ENCODE measurements at regions of chr7 and their contacts with region 1.

Region 1: DNA sequence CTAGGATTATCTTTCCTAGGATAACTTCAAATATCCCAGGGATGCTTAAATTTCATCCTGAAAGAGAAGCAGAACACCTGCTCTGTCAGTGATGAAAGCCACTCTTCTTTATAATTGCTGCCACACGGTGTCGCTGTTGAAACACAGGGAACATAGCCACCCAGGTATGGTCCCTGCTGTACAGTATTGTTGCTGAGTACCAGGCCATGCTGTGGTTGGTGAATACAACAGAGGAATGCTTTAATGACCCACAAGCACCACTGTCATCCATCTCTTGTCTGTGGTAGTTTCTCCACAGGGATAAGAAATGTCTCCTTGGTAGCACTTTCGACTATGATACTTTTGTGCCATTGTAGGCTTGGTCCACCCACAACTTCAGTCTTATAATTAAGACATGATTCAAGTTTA is 70.6 kb upstream of the STARD3NL start:
- DNase-seq: peak; percentile 70
- H3K4me3 ChIP-seq: no peak overlapping the region
- H3K27ac ChIP-seq: no peak overlapping the region
- H3K4me1 ChIP-seq: peaks cover 0 to 12% (median 0%) of the 10 kb centered on the region in 6 donors
- H3K27me3 ChIP-seq: peaks cover 0 to 6% (median 0%) of the 10 kb centered on the region in 7 donors
- CTCF ChIP-seq: peak; percentile 35 to 78 (median 68)
- POLR2A ChIP-seq: no peak

Region 2: GRCh38 chr7:38169847-38170246 is 62.4 kb after region 1 on chr7:
- intact Hi-C with region 1: loop called (anchors 10 kb)
- DNase-seq: no peak
- H3K4me3 ChIP-seq: no peak overlapping the region
- H3K27ac ChIP-seq: peak overlapping the region in 2 of 8 donors; percentile 10 to 21
- H3K4me1 ChIP-seq: peaks cover 0 to 20% (median 3%) of the 10 kb centered on the region in 6 donors
- H3K27me3 ChIP-seq: no peaks in the 10 kb centered on the region
- CTCF ChIP-seq: no peak
- POLR2A ChIP-seq: no peak

Region 3: GRCh38 chr7:38222481-38223096 is 115.1 kb after region 1 on chr7:
- intact Hi-C with region 1: loop called (anchors 2 kb)
- DNase-seq: no peak
- H3K4me3 ChIP-seq: no peak overlapping the region
- H3K27ac ChIP-seq: peak overlapping the region in 7 of 8 donors; percentile 10 to 79 (median 70)
- H3K4me1 ChIP-seq: peaks cover 8 to 77% (median 17%) of the 10 kb centered on the region in 6 donors
- H3K27me3 ChIP-seq: no peaks in the 10 kb centered on the region
- CTCF ChIP-seq: peak; percentile 73 to 95 (median 91)
- POLR2A ChIP-seq: no peak

Region 4: DNA sequence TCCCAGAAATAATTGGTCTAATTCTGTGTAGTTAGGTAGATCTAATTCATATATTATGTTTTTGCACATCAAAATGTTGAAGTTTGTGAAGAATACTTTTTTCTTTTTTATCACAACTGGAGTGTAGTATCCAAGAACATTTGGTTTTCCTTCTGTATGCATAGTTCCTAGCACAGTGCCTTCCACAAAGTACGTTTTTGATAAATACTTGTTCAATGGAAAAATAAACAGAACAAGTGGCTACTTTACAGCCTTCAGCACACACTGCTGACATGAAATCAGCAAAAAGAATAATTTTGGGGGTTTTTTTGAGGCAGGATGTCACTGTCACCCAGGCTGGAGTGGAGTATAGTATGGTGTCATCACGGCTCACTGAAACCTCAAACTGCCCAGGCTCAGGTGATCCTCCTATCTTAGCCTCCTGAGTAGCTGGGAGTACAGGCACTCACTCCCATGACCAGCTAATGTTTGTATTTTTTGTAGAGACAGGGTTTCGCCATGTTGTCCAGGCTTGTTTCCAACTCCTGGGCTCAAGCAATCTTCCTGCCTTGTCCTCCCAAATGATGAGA is 138.0 kb after region 1 on chr7:
- intact Hi-C with region 1: no loop called
- DNase-seq: no peak
- H3K4me3 ChIP-seq: no peak overlapping the region
- H3K27ac ChIP-seq: peak overlapping the region in 5 of 8 donors; percentile 16 to 60 (median 47)
- H3K4me1 ChIP-seq: peaks cover 0 to 25% (median 0%) of the 10 kb centered on the region in 6 donors
- H3K27me3 ChIP-seq: no peaks in the 10 kb centered on the region
- CTCF ChIP-seq: no peak
- POLR2A ChIP-seq: no peak

Region 5: GRCh38 chr7:38369816-38370493 is 262.5 kb after region 1 on chr7:
- intact Hi-C with region 1: loop called (anchors 5 kb)
- DNase-seq: peak; percentile 96
- H3K4me3 ChIP-seq: peak overlapping the region in 1 of 8 donors; percentile 40
- H3K27ac ChIP-seq: peak overlapping the region; percentile 16 to 80 (median 62)
- H3K4me1 ChIP-seq: peaks cover 23 to 96% (median 54%) of the 10 kb centered on the region in 6 donors
- H3K27me3 ChIP-seq: no peaks in the 10 kb centered on the region
- CTCF ChIP-seq: peak; percentile 63 to 93 (median 84)
- POLR2A ChIP-seq: no peak